ENCODE measurements at regions of chr4 and their contacts with region 1.

Region 1: GRCh38 chr4:156475322-156475721 is 496.3 kb downstream of the PDGFC start:
- DNase-seq: no peak
- ATAC-seq: peak; percentile 76
- H3K4me3 ChIP-seq: no peak overlapping the region
- H3K27ac ChIP-seq: no peak overlapping the region
- H3K4me1 ChIP-seq: peaks cover 0 to 8% of the 10 kb centered on the region in 2 donors
- H3K27me3 ChIP-seq: no peaks in the 10 kb centered on the region

Region 2: DNA sequence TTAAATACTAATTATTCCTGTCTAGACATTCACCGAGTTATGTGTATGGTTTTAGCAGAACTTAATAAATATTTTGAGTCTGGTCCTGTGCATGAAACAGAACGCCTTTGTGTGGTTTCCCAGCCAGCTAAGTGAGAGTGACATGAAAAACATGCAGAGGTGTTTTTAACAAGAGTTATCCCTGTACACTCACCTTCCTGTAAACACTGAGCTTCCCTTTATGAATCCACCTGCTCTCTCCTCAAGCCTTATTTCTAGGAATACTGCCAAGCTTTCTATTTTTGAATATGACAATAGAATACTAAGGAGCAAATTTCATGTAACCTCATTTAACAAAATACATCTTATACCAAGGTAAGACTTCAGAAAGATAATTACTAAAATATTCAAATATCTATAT is 251.3 kb before region 1 on chr4:
- intact Hi-C with region 1: no loop called
- DNase-seq: no peak
- ATAC-seq: no peak
- H3K4me3 ChIP-seq: no peak overlapping the region
- H3K27ac ChIP-seq: no peak overlapping the region
- H3K4me1 ChIP-seq: no peaks in the 10 kb centered on the region
- H3K27me3 ChIP-seq: no peaks in the 10 kb centered on the region

Region 3: DNA sequence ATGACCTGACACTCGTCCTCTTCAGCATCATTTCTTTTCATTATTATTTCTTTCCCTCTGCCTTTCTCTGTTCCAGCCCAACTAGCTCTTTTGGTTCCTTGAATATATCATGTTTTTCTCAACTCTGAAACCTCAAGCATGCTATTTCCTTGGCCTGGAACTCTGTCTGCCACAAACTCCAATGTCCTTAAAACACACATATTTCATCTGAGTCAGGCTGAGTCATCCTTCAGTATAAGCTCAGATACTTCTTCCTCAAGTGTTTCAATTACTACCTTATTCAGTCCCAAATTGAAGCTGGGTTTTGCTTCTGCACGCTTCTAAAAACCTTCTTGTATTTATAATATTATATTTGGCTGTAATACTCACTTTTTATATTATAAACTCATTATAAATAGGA is 72.1 kb after region 1 on chr4:
- intact Hi-C with region 1: loop called in 1 of 2 experiments (anchors 10 kb)
- DNase-seq: no peak
- ATAC-seq: peak; percentile 79
- H3K4me3 ChIP-seq: no peak overlapping the region
- H3K27ac ChIP-seq: peak overlapping the region in 1 of 2 donors; percentile 93
- H3K4me1 ChIP-seq: peaks cover 1 to 25% of the 10 kb centered on the region in 2 donors
- H3K27me3 ChIP-seq: no peaks in the 10 kb centered on the region

Region 4: DNA sequence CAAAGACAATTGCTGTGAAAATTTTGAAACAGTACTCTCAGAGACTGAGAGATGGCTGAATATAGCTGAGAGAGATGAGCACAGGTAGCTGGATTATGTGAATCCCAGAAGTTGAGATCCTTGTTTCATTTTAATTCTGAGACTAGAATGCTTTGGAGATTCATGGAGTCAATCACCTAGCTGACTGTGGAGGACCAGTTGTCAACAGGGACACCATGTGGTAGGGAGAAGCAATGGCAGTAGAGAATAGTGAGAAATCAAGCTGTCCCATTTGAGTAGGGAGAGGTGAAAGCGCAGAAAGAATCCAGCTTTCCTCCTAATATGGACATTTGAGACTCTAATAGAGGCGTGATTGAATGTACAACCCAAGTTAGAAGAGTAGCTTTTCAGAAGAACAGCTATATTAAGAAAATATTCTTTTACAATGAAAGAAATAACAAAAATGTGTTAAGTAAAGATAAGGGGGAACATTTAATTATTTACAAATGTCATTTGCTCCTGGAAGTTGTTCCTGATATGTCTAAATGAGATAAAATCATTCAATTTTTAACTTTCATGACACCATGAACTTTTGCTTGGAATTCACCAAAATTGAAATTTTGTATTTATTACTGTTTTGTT is 570.3 kb after region 1 on chr4:
- intact Hi-C with region 1: loop called (anchors 5 kb)
- DNase-seq: no peak
- ATAC-seq: peak; percentile 82
- H3K4me3 ChIP-seq: no peak overlapping the region
- H3K27ac ChIP-seq: no peak overlapping the region
- H3K4me1 ChIP-seq: no peaks in the 10 kb centered on the region
- H3K27me3 ChIP-seq: no peaks in the 10 kb centered on the region

Region 5: GRCh38 chr4:157128395-157128794 is 653.1 kb after region 1 on chr4:
- intact Hi-C with region 1: loop called (anchors 5 to 10 kb)
- DNase-seq: no peak
- ATAC-seq: no peak
- H3K4me3 ChIP-seq: no peak overlapping the region
- H3K27ac ChIP-seq: no peak overlapping the region
- H3K4me1 ChIP-seq: no peaks in the 10 kb centered on the region
- H3K27me3 ChIP-seq: no peaks in the 10 kb centered on the region

Measured in aorta (tissue), 5 donors.